ENCODE measurements at regions of chrX and their contacts with region 1.

Region 1: GRCh38 chrX:143988356-143988755 is 104.5 kb downstream of the UBE2NL start:
- DNase-seq: no peak
- H3K4me3 ChIP-seq: no peak overlapping the region
- H3K27ac ChIP-seq: no peak overlapping the region
- H3K4me1 ChIP-seq: no peaks in the 10 kb centered on the region
- H3K27me3 ChIP-seq: no peaks in the 10 kb centered on the region
- CTCF ChIP-seq: no peak
- POLR2A ChIP-seq: no peak

Region 2: DNA sequence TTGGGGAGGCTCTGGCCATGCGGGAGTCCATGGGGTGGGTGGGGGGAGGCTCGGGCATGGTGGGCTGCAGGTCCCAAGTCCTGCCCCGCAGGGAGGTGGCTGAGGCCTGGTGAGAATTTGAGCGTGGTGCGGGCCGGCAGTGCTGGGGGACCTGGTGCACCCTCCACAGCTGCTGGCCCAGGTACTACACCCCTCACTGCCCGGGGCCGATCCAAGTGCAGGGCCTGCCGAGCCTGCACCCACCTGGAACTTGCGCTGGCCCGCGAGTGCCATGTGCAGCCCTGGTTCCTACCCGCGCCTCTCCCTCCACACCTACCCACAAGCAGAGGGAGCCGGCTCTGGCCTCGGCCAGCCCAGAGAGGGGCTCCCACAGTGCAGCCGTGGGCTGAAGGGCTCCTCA is 262.1 kb before region 1 on chrX:
- intact Hi-C with region 1: no loop called
- DNase-seq: no peak
- H3K4me3 ChIP-seq: no peak overlapping the region
- H3K27ac ChIP-seq: no peak overlapping the region
- H3K4me1 ChIP-seq: no peaks in the 10 kb centered on the region
- H3K27me3 ChIP-seq: no peaks in the 10 kb centered on the region
- CTCF ChIP-seq: no peak
- POLR2A ChIP-seq: no peak

Region 3: GRCh38 chrX:143964549-143964948 is 23.8 kb before region 1 on chrX:
- intact Hi-C with region 1: loop called (anchors 2 kb)
- DNase-seq: no peak
- H3K4me3 ChIP-seq: no peak overlapping the region
- H3K27ac ChIP-seq: no peak overlapping the region
- H3K4me1 ChIP-seq: no peaks in the 10 kb centered on the region
- H3K27me3 ChIP-seq: no peaks in the 10 kb centered on the region
- CTCF ChIP-seq: no peak
- POLR2A ChIP-seq: no peak